ENCODE measurements at regions of chr12 and their contacts with region 1.

Region 1: DNA sequence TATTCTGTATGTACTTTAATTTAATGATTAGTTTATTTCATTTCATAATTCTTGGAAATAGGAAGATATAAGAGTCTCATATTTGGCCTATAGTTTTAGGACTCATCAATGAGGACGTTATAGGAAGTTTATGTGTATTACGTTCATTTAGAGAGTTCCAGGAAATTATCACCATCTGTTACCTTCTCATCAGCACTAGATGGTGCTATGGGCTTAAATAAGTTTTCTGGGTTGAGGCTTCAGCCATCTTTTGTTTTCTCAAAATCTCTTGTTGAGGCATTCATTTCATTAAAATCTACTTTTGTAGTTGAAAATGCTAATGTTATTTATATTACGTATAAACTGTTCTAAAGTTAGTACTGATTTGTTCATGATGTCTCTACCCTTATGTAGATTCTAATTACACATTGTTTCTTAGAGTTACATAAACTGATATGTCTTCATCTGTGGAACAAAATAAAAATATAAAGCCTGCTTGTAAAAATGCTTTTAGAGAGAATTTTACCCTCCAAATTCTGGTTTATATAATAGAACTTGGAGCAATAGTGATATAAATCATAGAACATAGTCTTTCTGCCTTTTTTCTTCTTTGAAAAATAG is 89.2 kb downstream of the CFAP54 start:
- DNase-seq: no peak
- H3K4me3 ChIP-seq: no peak overlapping the region
- H3K27ac ChIP-seq: no peak overlapping the region
- H3K4me1 ChIP-seq: no peaks in the 10 kb centered on the region
- H3K27me3 ChIP-seq: no peaks in the 10 kb centered on the region
- CTCF ChIP-seq: peak; percentile 29 to 53 (median 34)
- EP300 ChIP-seq: no peak
- POLR2A ChIP-seq: no peak

Region 2: DNA sequence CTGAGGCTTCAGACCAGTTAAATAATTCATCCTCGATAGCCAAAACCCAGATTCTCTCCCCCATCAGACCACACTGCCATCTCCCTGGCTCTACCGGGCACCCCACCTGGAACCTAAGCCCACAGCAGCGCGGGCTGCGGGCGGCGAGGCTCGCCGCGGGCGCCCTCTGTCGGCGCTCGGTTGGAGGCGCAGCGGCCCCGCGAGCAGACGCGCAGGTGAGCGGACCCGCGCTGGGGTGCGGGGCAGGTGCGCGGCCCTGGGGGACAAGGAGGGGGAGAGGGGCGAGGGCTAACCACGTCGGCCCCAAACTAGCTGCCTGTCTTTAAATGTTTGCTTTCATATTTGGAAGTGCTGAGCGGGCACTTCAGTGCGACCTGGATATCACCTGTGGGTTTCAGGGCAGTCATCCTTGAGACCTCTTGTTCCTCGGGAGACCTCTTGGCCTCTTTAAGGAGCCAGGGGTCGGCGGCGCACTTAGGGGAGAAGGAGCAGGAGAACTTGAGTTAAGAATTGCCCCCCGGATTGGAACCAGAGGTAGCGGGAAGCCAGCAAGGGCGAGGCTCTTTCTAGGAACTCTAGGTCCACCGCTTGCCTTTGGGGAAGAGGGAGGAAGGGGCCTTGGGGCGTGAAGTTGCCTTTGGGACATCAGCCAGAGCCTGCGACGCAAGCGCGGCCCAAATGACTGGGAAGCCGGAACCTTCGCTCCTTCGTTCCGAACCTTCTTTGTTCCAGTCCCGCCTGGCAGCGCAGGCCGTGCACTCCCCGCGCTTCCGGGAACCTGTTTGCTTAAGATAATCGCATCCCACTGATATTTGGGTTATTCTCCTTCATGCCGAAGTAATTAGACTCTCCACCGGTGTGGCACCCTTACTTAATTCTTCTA is 407.1 kb after region 1 on chr12:
- intact Hi-C with region 1: loop called (anchors 2 kb)
- DNase-seq: no peak
- H3K4me3 ChIP-seq: peak overlapping the region; percentile 1 to 53 (median 38)
- H3K27ac ChIP-seq: no peak overlapping the region
- H3K4me1 ChIP-seq: peaks cover 0 to 12% (median 11%) of the 10 kb centered on the region in 4 donors
- H3K27me3 ChIP-seq: peaks cover 0 to 17% (median 4%) of the 10 kb centered on the region in 3 donors
- CTCF ChIP-seq: peak in 1 of 4 experiments; percentile 84
- EP300 ChIP-seq: no peak
- POLR2A ChIP-seq: no peak

Region 3: DNA sequence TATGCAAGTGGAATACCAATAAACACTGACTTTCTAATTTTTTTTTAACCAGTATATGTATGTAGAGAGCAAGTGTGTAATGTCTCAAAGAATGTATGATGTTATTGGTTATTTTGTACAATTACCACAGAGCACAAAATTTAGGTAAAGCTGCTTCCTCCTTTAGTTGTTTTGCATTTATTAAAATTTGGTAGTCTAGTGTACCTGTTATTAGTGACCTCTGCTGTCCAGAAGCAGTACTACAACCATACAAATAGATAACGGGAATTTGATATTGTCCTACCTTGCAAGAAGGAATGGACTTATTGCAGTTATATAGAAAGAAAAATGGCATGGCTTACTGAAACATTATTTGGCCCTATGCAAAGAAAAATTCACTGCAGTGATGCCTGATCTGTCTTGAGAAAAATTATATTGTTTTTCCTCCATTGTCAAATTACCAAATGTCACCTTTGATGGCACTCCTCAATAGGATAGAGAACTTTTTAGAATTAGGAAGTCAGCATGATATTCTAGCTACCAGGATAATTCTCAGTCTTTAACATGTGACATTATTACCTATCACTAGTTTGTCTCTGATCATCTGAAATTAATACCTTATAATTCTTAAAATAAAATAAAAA is 730.1 kb after region 1 on chr12:
- intact Hi-C with region 1: loop called (anchors 5 kb)
- DNase-seq: no peak
- H3K4me3 ChIP-seq: no peak overlapping the region
- H3K27ac ChIP-seq: no peak overlapping the region
- H3K4me1 ChIP-seq: no peaks in the 10 kb centered on the region
- H3K27me3 ChIP-seq: no peaks in the 10 kb centered on the region
- CTCF ChIP-seq: peak in 3 of 4 experiments; percentile 33 to 71 (median 46)
- EP300 ChIP-seq: no peak
- POLR2A ChIP-seq: no peak

Region 4: GRCh38 chr12:98397316-98398105 is 1818.9 kb after region 1 on chr12:
- intact Hi-C with region 1: loop called (anchors 5 kb)
- DNase-seq: peak; percentile 86
- H3K4me3 ChIP-seq: peak overlapping the region; percentile 25 to 45 (median 44)
- H3K27ac ChIP-seq: peak overlapping the region in 3 of 4 donors; percentile 14 to 52 (median 39)
- H3K4me1 ChIP-seq: peaks cover 0 to 9% (median 3%) of the 10 kb centered on the region in 4 donors
- H3K27me3 ChIP-seq: no peaks in the 10 kb centered on the region
- CTCF ChIP-seq: peak; percentile 69 to 89 (median 82)
- EP300 ChIP-seq: no peak
- POLR2A ChIP-seq: no peak

Measured in sigmoid colon (tissue), 7 donors.